Caco-2 (cell line): ENCODE measurements at regions of chr19 and their contacts with region 1.

Region 1: GRCh38 chr19:47152224-47153017 is 21.8 kb downstream of the SAE1 start:
- DNase-seq: peak in 1 of 2 experiments; percentile 55
- H3K4me3 ChIP-seq: no peak overlapping the region
- H3K4me3 Mint-ChIP-seq: peak overlapping the region; percentile 3
- H3K27ac Mint-ChIP-seq: peak overlapping the region; percentile 31
- H3K4me1 ChIP-seq: peaks cover 33% of the 10 kb centered on the region
- H3K4me1 Mint-ChIP-seq: peaks cover 36% of the 10 kb centered on the region
- H3K27me3 ChIP-seq: no peaks in the 10 kb centered on the region
- H3K27me3 Mint-ChIP-seq: no peaks in the 10 kb centered on the region
- CTCF ChIP-seq: no peak

Region 2: DNA sequence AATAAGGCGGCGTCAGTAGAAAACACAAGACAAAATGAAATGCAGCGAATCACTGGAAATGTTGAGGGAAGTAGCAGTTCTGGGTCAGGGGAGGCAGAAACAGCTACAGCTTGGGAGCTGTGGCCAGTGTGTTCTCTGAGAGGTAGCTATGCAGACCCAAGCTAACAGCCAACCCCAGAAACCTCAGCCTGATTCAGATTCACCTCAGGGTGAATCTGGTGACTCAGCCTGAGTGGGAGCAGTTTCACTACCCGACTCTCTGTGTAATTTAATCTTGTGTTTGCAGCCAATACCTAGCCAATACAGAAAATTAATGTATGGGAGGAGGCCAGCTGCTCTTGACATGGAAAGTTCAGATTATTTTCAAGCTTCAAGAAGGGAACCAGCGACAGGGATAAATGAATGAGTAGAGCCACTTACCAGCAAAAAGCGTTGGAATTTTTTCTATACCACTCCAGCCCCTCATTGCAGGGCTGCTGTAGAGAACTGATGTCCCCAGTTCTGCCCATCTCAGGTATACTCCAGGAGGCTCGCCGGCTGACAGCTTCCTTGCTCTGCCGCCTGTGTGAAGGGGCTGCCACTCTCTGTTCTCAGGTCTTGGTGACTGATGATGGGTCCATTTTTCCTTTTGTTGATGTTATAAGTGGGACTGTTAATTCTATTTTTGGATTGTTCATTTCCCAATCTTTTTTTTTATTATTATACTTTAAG is 1036.9 kb before region 1 on chr19:
- CTCF ChIA-PET with region 1: no interaction called
- POLR2A ChIA-PET with region 1: no interaction called
- intact Hi-C with region 1: no loop called
- DNase-seq: no peak
- H3K4me3 ChIP-seq: no peak overlapping the region
- H3K4me3 Mint-ChIP-seq: no peak overlapping the region
- H3K27ac Mint-ChIP-seq: no peak overlapping the region
- H3K4me1 ChIP-seq: no peaks in the 10 kb centered on the region
- H3K4me1 Mint-ChIP-seq: no peaks in the 10 kb centered on the region
- H3K27me3 ChIP-seq: no peaks in the 10 kb centered on the region
- H3K27me3 Mint-ChIP-seq: no peaks in the 10 kb centered on the region
- CTCF ChIP-seq: no peak

Region 3: GRCh38 chr19:47130591-47131227 is 21.7 kb before region 1 on chr19 and contains the start of gene SAE1:
- CTCF ChIA-PET with region 1: no interaction called
- POLR2A ChIA-PET with region 1: no interaction called
- intact Hi-C with region 1: loop called (anchors 2 kb)
- DNase-seq: peak; percentile 99
- H3K4me3 ChIP-seq: peak within 1 kb of the TSS; percentile 86
- H3K4me3 Mint-ChIP-seq: peak within 1 kb of the TSS; percentile 94
- H3K27ac Mint-ChIP-seq: peak within 1 kb of the TSS; percentile 98
- H3K4me1 ChIP-seq: peaks cover 37% of the 10 kb centered on the region
- H3K4me1 Mint-ChIP-seq: peaks cover 32% of the 10 kb centered on the region
- H3K27me3 ChIP-seq: no peaks in the 10 kb centered on the region
- H3K27me3 Mint-ChIP-seq: no peaks in the 10 kb centered on the region
- CTCF ChIP-seq: peak in 1 of 2 experiments; percentile 70
- total RNA-seq, gene SAE1: 238 and 251 TPM in 2 replicates

Region 4: DNA sequence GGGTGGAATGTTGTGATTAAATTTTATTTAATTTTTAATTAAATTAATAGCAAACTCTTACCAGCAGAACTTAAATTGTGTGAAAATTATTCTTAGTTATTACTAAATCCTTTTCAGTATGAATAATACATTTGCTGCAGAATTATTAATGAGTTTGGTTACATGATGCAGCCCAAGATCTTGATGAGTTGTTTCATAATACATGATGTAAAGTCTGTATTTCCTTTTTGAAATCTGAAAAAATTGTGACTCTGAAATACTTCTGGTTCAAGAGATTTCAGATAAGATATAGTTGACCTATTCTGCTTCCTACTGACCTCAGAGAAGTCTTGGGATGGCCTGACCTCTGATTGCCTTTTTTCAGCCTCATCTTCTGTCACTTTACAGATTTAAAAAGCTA is 10.7 kb before region 1 on chr19:
- CTCF ChIA-PET with region 1: interaction called, 12 read pairs
- POLR2A ChIA-PET with region 1: no interaction called
- intact Hi-C with region 1: no loop called
- DNase-seq: no peak
- H3K4me3 ChIP-seq: no peak overlapping the region
- H3K4me3 Mint-ChIP-seq: no peak overlapping the region
- H3K27ac Mint-ChIP-seq: peak overlapping the region; percentile 24
- H3K4me1 ChIP-seq: peaks cover 11% of the 10 kb centered on the region
- H3K4me1 Mint-ChIP-seq: peaks cover 17% of the 10 kb centered on the region
- H3K27me3 ChIP-seq: no peaks in the 10 kb centered on the region
- H3K27me3 Mint-ChIP-seq: no peaks in the 10 kb centered on the region
- CTCF ChIP-seq: no peak

Region 5: DNA sequence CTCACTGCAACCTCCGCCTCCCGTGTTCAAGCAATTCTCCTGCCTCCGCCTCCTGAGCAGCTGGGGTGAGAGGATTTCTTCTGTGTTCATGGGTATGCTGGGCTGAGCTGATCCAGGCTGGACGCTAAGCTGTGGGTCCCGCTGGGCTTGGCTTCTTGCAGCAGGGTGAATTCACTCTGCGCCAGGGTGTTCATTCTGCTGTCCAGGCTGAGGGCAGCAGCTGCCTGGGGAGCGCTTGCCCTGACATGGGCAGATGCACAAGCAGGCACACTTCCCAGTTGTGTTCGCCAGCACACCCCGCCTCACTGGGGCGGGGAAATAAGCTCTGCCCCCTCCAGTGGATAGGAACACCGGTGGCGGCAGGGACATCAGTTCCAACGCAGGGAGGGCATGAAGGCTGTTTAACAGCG is 114.9 kb after region 1 on chr19:
- CTCF ChIA-PET with region 1: no interaction called
- POLR2A ChIA-PET with region 1: no interaction called
- intact Hi-C with region 1: no loop called
- DNase-seq: no peak
- H3K4me3 ChIP-seq: no peak overlapping the region
- H3K4me3 Mint-ChIP-seq: no peak overlapping the region
- H3K27ac Mint-ChIP-seq: no peak overlapping the region
- H3K4me1 ChIP-seq: no peaks in the 10 kb centered on the region
- H3K4me1 Mint-ChIP-seq: peaks cover 5% of the 10 kb centered on the region
- H3K27me3 ChIP-seq: no peaks in the 10 kb centered on the region
- H3K27me3 Mint-ChIP-seq: no peaks in the 10 kb centered on the region
- CTCF ChIP-seq: no peak